A673 (cell line): ENCODE measurements at regions of chr13 and their contacts with region 1.

Region 1: DNA sequence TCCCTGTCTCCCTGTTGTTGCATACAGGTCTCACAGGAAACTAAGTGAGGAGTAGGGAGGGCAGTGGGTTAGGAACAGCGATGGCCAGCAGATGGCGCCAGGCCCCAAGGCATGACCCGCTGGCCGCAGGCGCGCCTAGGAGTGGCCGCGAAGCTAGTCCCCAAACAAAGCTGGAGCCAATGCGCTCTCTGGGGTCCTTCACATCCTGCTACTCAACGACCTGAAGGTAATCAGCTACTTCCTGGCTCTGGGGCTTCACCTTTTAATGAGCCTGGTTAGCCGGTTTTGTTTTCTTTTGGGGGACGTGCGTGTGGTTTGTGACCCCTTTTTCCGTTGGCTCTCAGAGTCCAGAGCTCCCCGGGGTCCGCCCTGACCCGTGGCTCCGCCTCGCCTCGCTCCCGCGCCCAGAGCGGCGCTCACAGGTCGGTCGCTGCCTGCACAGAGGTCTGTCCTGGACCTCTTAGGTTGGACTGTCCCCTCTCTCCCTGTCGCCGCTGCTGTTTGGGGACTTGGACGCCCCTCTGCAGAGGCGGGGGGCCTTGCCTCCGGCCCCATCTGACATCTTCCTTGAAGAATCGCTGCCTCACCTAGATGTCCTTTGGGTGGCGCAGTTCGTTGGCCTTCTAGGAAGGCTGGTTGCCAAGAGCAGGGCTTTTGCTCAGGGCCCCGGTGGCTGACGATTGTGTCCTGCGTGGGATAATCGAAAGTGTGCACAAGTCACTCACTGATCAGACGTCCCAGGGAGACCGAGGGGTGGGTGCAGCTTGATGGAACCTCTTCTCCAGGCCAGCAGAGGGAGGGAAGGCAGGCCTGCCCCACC is 62.1 kb upstream of the GTF3A start:
- DNase-seq: peak; percentile 79
- H3K4me3 ChIP-seq: peak overlapping the region; percentile 29
- H3K27ac ChIP-seq: no peak overlapping the region
- H3K4me1 ChIP-seq: peaks cover 3% of the 10 kb centered on the region
- H3K27me3 ChIP-seq: peaks cover 18% of the 10 kb centered on the region
- CTCF ChIP-seq: peak; percentile 91

Region 2: GRCh38 chr13:26946684-26947343 is 415.5 kb before region 1 on chr13:
- CTCF ChIA-PET with region 1: interaction called, 6 read pairs
- POLR2A ChIA-PET with region 1: no interaction called
- intact Hi-C with region 1: loop called (anchors 1 kb)
- DNase-seq: peak; percentile 48
- H3K4me3 ChIP-seq: no peak overlapping the region
- H3K27ac ChIP-seq: no peak overlapping the region
- H3K4me1 ChIP-seq: no peaks in the 10 kb centered on the region
- H3K27me3 ChIP-seq: no peaks in the 10 kb centered on the region
- CTCF ChIP-seq: peak; percentile 62

Region 3: GRCh38 chr13:26985285-26985878 is 376.9 kb before region 1 on chr13:
- CTCF ChIA-PET with region 1: interaction called, 13 read pairs
- POLR2A ChIA-PET with region 1: no interaction called
- intact Hi-C with region 1: loop called (anchors 1 kb)
- DNase-seq: peak; percentile 82
- H3K4me3 ChIP-seq: no peak overlapping the region
- H3K27ac ChIP-seq: no peak overlapping the region
- H3K4me1 ChIP-seq: no peaks in the 10 kb centered on the region
- H3K27me3 ChIP-seq: peaks cover 6% of the 10 kb centered on the region
- CTCF ChIP-seq: peak; percentile 78

Region 4: GRCh38 chr13:27977476-27978300 is 615.4 kb after region 1 on chr13:
- CTCF ChIA-PET with region 1: no interaction called
- POLR2A ChIA-PET with region 1: no interaction called
- intact Hi-C with region 1: loop called (anchors 5 kb)
- DNase-seq: peak; percentile 22
- H3K4me3 ChIP-seq: no peak overlapping the region
- H3K27ac ChIP-seq: no peak overlapping the region
- H3K4me1 ChIP-seq: no peaks in the 10 kb centered on the region
- H3K27me3 ChIP-seq: peaks cover 100% of the 10 kb centered on the region
- CTCF ChIP-seq: no peak

Region 5: GRCh38 chr13:27988520-27988919 is 626.2 kb after region 1 on chr13 and contains the start of gene URAD:
- CTCF ChIA-PET with region 1: interaction called, 10 read pairs
- POLR2A ChIA-PET with region 1: no interaction called
- intact Hi-C with region 1: loop called (anchors 5 kb)
- DNase-seq: no peak
- H3K4me3 ChIP-seq: no peak within 1 kb of the TSS
- H3K27ac ChIP-seq: no peak within 1 kb of the TSS
- H3K4me1 ChIP-seq: no peaks in the 10 kb centered on the region
- H3K27me3 ChIP-seq: peaks cover 24% of the 10 kb centered on the region
- CTCF ChIP-seq: no peak
- total RNA-seq, gene URAD: not detected in 2 replicates

Region 6: DNA sequence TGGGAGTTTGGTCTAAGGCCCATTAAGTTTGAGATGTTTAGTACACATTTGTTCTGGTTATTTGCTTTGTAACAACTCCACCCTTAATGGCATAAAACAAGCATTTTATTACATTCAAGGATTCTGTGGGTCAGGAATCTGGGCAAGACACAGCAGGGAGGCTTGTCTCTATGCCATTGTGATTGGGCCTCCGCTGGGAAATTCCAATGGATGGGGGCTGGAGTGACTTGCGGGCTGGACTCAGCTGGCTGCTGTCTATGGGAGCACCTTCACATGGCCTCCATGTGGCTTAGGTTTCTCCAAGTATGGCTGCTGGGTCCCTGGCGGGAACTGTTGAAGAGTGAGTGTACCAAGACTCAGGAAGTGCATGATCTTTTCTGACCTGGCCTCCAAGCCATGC is 935.1 kb after region 1 on chr13:
- CTCF ChIA-PET with region 1: interaction called, 10 read pairs
- POLR2A ChIA-PET with region 1: no interaction called
- intact Hi-C with region 1: no loop called
- DNase-seq: peak; percentile 44
- H3K4me3 ChIP-seq: no peak overlapping the region
- H3K27ac ChIP-seq: no peak overlapping the region
- H3K4me1 ChIP-seq: peaks cover 6% of the 10 kb centered on the region
- H3K27me3 ChIP-seq: no peaks in the 10 kb centered on the region
- CTCF ChIP-seq: no peak